Heart right ventricle (tissue), 16 donors: ENCODE measurements at regions of chr9 and their contacts with region 1.

Region 1: GRCh38 chr9:125963932-125964331 is 216.8 kb downstream of the PBX3 start:
- DNase-seq: no peak
- ATAC-seq: no peak
- H3K4me3 ChIP-seq: no peak overlapping the region
- H3K27ac ChIP-seq: no peak overlapping the region
- H3K4me1 ChIP-seq: no peaks in the 10 kb centered on the region
- H3K27me3 ChIP-seq: no peaks in the 10 kb centered on the region
- CTCF ChIP-seq: no peak

Region 2: GRCh38 chr9:125977223-125977622 is 13.3 kb after region 1 on chr9:
- intact Hi-C with region 1: no loop called
- DNase-seq: no peak
- ATAC-seq: no peak
- H3K4me3 ChIP-seq: no peak overlapping the region
- H3K27ac ChIP-seq: no peak overlapping the region
- H3K4me1 ChIP-seq: no peaks in the 10 kb centered on the region
- H3K27me3 ChIP-seq: no peaks in the 10 kb centered on the region
- CTCF ChIP-seq: no peak

Region 3: DNA sequence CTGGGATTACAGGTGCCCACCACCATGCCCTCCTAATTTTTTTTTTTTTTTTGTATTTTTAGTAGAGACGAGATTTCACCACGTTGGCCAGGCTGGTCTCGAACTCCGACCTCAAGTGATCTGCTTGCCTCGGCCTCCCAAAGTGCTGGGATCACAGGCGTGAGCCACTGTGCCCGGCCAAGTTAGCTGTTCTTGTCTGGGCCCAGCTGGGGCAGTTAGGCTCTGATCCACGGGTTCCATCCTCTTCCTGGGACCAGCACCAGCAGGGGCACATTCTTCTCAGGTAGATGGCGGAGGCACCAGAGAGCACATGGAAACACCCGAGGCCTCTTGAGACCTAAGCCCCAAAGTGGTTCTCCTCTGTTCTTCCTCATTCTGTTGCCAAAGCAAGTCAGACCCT is 64.8 kb after region 1 on chr9:
- intact Hi-C with region 1: loop called in 1 of 10 experiments (anchors 2 kb)
- DNase-seq: no peak
- ATAC-seq: no peak
- H3K4me3 ChIP-seq: no peak overlapping the region
- H3K27ac ChIP-seq: no peak overlapping the region
- H3K4me1 ChIP-seq: no peaks in the 10 kb centered on the region
- H3K27me3 ChIP-seq: peaks cover 0 to 26% (median 6%) of the 10 kb centered on the region in 7 donors
- CTCF ChIP-seq: no peak